ENCODE measurements at regions of chr6 and their contacts with region 1.

Region 1: DNA sequence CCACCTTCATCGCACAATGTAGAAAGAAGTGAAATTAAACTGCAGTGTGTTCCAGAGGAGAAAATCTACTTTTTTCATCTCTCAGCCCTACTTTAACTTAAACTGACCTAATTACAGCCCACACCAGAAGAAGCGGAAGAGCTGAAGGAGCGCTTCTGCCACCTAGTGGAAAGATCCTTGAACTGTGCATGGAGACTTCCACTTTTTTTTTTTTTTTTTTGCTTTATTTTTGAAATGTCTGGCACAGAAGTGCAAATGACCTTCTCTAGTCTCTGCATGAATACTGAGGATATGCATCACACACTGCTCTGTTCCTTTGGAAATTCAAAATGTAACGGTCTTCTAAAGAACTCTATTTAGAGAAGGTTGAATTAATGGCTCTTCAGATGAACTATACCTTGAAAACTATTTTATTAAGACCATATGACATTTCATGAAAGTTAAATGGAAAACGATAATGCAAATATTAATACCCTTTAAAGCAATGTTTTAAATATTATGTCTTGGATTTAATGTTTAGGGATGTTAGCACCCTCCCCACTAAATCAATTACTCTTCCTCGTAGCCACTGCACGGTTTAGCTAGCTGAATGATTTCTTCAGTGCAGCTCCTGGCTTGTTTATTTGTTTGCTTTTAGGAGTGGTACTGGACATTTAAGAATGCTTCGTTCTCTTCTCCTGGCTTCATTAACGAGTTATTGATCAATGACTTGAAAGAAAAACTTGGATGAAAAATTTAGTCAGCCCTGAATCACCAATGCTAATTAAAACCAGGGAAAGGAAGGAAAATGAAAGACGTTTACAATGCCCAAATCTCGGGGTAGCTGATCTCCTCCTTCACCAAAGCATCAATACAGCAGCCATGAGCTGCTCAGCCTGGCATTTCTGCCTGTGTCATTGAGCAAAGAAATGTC is 569.6 kb upstream of the GJE1 start:
- DNase-seq: peak; percentile 35
- H3K4me3 Mint-ChIP-seq: peak overlapping the region; percentile 51
- H3K27ac Mint-ChIP-seq: peak overlapping the region; percentile 2
- H3K4me1 Mint-ChIP-seq: peaks cover 19% of the 10 kb centered on the region
- H3K27me3 Mint-ChIP-seq: peaks cover 8% of the 10 kb centered on the region

Region 2: DNA sequence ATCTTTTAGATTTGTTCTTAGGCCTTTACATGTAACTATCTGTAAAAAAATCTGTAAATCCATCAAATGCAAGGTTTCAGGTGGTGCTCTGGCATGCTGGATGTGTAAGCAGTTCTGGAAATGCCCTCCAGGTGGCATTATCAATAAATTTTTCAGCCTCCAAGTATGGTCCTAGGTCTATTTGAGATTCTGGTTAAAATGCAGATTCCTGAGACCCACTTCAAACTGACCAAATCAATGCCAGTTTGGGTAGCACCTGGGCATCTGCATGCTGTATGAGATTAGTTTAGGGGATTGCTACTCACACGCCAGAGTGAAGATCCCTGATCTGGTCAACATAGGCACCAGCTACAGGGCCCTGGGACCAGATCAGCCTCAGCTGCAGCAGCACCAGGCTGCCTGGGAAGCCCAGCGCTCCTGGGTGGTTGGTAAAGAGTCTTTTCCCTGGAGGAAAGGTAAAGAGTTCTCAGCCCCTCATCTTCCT is 1681.3 kb before region 1 on chr6:
- intact Hi-C with region 1: loop called (anchors 5 kb)
- DNase-seq: no peak
- H3K4me3 Mint-ChIP-seq: no peak overlapping the region
- H3K27ac Mint-ChIP-seq: no peak overlapping the region
- H3K4me1 Mint-ChIP-seq: peaks cover 6% of the 10 kb centered on the region
- H3K27me3 Mint-ChIP-seq: peaks cover 3% of the 10 kb centered on the region

Region 3: GRCh38 chr6:140921366-140922226 is 641.5 kb before region 1 on chr6:
- intact Hi-C with region 1: loop called (anchors 1 kb)
- DNase-seq: no peak
- H3K4me3 Mint-ChIP-seq: no peak overlapping the region
- H3K27ac Mint-ChIP-seq: no peak overlapping the region
- H3K4me1 Mint-ChIP-seq: no peaks in the 10 kb centered on the region
- H3K27me3 Mint-ChIP-seq: no peaks in the 10 kb centered on the region

Region 4: DNA sequence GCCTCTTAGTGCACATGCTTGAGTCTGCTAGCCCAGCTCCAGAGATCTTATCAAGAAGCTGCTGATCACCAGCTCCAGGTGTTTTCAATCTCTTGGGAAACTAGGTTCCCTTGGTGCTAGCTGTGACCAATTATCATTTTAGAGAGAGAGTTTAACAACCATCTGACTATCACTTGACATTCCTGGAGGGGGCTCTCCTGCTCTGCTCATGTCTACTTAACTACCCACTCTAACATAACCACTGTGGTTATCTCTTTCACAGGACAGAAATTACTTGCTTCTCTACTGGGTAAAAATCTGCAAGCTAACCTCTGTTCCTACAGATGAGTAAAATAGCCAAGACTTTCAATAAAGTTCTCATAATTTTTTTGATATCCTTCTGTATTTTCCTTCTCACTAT is 253.8 kb before region 1 on chr6:
- intact Hi-C with region 1: loop called (anchors 1 kb)
- DNase-seq: no peak
- H3K4me3 Mint-ChIP-seq: no peak overlapping the region
- H3K27ac Mint-ChIP-seq: no peak overlapping the region
- H3K4me1 Mint-ChIP-seq: no peaks in the 10 kb centered on the region
- H3K27me3 Mint-ChIP-seq: no peaks in the 10 kb centered on the region

Region 5: GRCh38 chr6:141464490-141464889 is 98.6 kb before region 1 on chr6:
- intact Hi-C with region 1: loop called (anchors 5 kb)
- DNase-seq: no peak
- H3K4me3 Mint-ChIP-seq: no peak overlapping the region
- H3K27ac Mint-ChIP-seq: no peak overlapping the region
- H3K4me1 Mint-ChIP-seq: peaks cover 14% of the 10 kb centered on the region
- H3K27me3 Mint-ChIP-seq: no peaks in the 10 kb centered on the region

Region 6: GRCh38 chr6:141513830-141514229 is 49.3 kb before region 1 on chr6:
- intact Hi-C with region 1: no loop called
- DNase-seq: no peak
- H3K4me3 Mint-ChIP-seq: no peak overlapping the region
- H3K27ac Mint-ChIP-seq: no peak overlapping the region
- H3K4me1 Mint-ChIP-seq: peaks cover 9% of the 10 kb centered on the region
- H3K27me3 Mint-ChIP-seq: no peaks in the 10 kb centered on the region